Breast epithelium (tissue), 4 donors: ENCODE measurements at regions of chr17 and their contacts with region 1.

Region 1: DNA sequence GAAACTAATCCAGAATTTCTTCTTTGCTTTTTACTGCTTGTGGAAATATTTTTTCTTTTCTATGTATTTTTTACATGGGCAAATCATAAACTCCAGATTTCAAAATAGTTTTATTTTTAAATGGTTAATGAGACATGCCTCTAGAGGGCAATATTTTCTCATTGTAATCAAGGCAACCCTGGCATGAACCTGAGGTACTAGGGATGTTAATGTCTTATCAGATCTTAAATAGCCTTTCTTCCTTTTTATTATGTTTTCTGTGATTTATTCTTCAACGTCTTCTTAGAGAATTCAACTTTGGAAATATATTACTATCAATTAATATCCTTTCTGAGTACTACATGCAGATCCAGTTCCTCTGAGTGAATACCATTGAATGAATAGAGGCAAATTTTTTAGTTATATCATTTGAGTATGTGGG is 324.7 kb downstream of the BCAS3 start:
- DNase-seq: no peak
- H3K4me3 ChIP-seq: no peak overlapping the region
- H3K27ac ChIP-seq: no peak overlapping the region
- H3K4me1 ChIP-seq: no peaks in the 10 kb centered on the region
- H3K27me3 ChIP-seq: no peaks in the 10 kb centered on the region
- CTCF ChIP-seq: peak in 2 of 3 donors; percentile 8 to 33
- POLR2A ChIP-seq: no peak

Region 2: DNA sequence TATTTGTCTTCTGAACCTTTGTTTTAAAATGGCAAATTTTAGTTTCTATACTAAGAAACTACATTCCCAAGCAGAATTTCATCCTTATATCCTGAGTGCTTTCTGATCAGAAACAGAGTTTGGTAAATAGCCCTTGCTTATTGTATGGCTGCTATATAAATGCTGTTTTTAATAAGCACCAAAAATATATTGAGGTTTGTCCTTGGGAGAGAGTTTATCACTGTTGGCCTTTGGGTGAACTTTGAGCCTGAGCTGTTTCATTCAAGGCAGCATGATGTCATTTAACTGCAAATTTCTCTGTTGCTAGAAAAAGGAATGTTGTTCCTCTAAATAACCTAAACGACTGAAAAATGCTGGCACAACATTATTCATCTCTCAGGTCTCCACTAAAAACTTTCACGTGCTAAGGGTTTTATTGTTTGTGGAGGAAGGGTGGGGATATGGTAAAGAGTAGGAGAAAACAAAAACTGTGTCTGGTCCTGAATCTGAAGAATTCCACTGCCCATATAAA is 63.0 kb after region 1 on chr17:
- intact Hi-C with region 1: no loop called
- DNase-seq: no peak
- H3K4me3 ChIP-seq: no peak overlapping the region
- H3K27ac ChIP-seq: no peak overlapping the region
- H3K4me1 ChIP-seq: no peaks in the 10 kb centered on the region
- H3K27me3 ChIP-seq: no peaks in the 10 kb centered on the region
- CTCF ChIP-seq: no peak
- POLR2A ChIP-seq: no peak

Region 3: DNA sequence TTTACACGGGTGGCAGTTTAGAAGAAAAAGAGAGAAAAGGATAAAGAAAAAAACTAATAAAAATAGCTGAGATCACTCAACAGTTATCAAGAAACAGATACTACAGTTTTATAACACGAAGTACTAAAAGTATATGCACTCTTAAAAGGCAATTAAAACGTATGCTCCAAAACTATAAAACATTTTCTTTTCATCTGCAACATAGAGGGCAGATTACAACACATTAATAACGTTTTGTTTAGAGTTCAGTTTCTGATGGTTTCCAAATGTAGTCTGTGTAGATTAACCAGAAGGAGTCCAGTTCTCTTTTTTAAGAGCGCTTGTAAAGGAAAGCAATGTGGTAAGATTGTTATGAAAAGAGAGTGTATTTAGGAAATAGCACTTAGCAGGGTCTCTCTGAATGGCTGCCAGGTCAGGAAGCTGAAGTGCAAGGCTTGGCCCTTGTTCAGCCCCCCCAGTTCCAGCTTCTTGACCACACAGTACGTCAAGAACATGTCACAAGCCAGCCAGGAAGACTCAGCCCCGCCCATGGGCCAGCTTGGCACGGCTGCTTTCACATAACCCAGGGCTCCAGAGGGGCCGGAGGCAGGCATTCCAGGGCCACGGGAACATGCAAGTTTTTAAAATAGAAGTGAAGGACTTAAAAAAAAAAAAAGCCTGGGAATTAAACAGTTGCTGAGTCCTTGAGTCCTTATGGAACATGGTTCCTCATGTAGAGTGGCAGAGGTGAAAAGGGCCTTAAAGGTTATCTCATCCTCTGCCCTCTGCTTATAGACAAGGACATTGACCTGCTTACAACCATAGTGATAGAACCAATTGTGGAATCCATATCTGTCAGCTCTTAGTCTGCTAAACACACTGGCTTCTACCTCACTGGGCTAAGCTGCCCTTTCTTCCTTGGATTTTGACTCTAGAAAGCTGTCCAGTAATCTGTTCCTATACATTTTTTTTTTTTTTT is 249.9 kb after region 1 on chr17:
- intact Hi-C with region 1: loop called (anchors 10 kb)
- DNase-seq: peak; percentile 59 to 67
- H3K4me3 ChIP-seq: no peak overlapping the region
- H3K27ac ChIP-seq: peak overlapping the region; percentile 49 to 56
- H3K4me1 ChIP-seq: no peaks in the 10 kb centered on the region
- H3K27me3 ChIP-seq: no peaks in the 10 kb centered on the region
- CTCF ChIP-seq: no peak
- POLR2A ChIP-seq: no peak